ENCODE measurements at regions of chr11 and their contacts with region 1.

Region 1: GRCh38 chr11:73760679-73761402 is at the start of gene RAB6A:
- DNase-seq: peak; percentile 97
- H3K27ac ChIP-seq: peak within 1 kb of the TSS; percentile 96
- CTCF ChIP-seq: peak; percentile 26

Region 2: DNA sequence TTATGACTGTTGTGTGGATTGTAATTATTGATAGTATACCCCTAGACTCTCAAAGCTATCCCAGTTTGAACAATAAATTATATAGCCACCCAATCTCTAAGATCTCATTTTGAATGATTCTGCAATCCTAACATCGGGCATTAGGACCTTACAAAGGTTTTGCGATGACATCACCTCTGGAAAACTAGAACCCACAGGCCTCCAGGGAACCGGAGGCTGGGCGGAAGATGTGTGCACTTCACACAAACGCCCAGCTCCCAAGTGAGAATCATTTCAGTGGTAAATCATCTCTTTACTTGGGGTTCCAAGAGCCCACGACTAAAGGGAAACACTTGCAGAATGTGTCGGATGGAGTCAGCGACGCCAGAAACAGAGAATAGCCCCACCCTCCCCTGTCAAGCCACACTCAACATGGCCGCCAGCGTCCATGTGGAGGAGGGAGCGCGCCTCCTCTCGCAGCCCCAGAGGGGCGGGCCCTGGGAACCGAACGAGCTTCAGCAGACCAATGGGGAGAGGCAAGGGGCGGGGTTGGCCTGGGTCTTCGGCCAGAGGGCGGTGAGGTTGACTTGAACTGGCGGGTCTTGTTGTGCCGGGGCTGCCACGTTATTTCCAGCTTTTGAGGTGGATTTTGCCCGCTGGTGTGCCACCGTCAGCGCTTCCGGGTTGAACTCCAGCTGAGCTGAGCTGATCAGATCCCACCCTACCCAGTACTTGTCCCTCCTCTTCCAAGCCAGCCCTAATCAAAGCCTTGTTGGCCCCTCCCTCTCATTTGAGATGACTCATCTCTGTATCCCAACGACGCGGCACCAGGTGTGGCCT is 18.5 kb after region 1 on chr11:
- CTCF ChIA-PET with region 1: interaction called, 5 read pairs
- POLR2A ChIA-PET with region 1: interaction called, 11 read pairs
- DNase-seq: peak; percentile 97
- H3K27ac ChIP-seq: peak overlapping the region; percentile 97
- CTCF ChIP-seq: no peak